HEK293T (cell line): ENCODE measurements at regions of chr12 and their contacts with region 1.

Region 1: DNA sequence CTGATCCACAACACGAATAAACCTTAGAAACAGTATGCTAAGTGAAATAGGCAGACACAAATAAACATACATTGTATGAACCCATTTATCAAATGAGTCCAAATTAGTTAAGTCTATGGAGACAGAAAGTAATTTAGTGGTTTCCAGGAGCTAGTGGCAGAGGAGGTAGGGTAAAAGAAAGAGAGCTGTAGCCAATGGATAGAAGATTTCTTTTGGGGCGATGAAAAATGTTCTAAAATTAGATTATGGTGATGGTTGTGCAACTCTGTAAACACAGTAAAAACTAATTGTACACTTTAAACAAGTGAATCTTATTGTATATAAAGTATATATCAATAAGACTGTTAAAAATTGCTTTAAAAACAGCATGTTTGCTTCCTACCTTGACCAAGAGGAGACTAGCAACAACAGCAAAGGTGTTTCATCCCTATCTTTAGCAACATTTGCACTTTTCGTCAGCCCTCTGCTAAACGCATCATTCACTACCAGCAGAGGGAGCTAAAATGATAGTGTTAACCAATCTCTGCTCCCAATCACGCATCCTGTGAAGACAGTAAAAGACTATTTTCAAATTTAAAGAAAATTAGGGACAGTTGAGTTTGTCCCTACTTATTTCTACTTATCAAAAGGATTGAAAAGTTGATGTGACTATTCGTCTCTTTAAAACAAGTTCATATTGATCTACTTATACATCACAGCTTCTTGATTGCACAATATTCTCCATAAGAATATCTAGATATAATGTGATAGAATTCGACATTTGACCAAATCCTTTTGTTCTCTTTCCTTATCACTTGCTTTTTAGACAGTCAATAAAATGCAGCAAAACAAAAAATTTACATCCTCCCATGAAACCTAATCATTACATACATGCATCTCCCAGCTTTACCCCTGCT is 24.0 kb upstream of the LGR5 start:
- DNase-seq: peak; percentile 58

Region 2: GRCh38 chr12:71392521-71393145 is 23.0 kb before region 1 on chr12:
- CTCF ChIA-PET with region 1: no interaction called
- POLR2A ChIA-PET with region 1: no interaction called
- DNase-seq: peak; percentile 71

Region 3: GRCh38 chr12:71440763-71441748 is 25.5 kb after region 1 on chr12:
- CTCF ChIA-PET with region 1: no interaction called
- POLR2A ChIA-PET with region 1: no interaction called
- DNase-seq: no peak

Region 4: GRCh38 chr12:71551529-71551928 is 135.9 kb after region 1 on chr12:
- CTCF ChIA-PET with region 1: interaction called, 10 read pairs
- POLR2A ChIA-PET with region 1: no interaction called
- DNase-seq: peak; percentile 14